CD8-positive, alpha-beta memory T cell (primary cell): ENCODE measurements at regions of chr7 and their contacts with region 1.

Region 1: GRCh38 chr7:44858161-44858560 is 10.3 kb upstream of the H2AZ2 start:
- DNase-seq: no peak
- H3K4me3 ChIP-seq: no peak overlapping the region
- H3K4me3 Mint-ChIP-seq: no peak overlapping the region
- H3K27ac ChIP-seq: no peak overlapping the region
- H3K27ac Mint-ChIP-seq: no peak overlapping the region
- H3K4me1 ChIP-seq: no peaks in the 10 kb centered on the region
- H3K4me1 Mint-ChIP-seq: peaks cover 3 to 6% (median 5%) of the 10 kb centered on the region in 3 donors
- H3K27me3 ChIP-seq: no peaks in the 10 kb centered on the region
- H3K27me3 Mint-ChIP-seq: peaks cover 0 to 12% of the 10 kb centered on the region in 2 donors

Region 2: DNA sequence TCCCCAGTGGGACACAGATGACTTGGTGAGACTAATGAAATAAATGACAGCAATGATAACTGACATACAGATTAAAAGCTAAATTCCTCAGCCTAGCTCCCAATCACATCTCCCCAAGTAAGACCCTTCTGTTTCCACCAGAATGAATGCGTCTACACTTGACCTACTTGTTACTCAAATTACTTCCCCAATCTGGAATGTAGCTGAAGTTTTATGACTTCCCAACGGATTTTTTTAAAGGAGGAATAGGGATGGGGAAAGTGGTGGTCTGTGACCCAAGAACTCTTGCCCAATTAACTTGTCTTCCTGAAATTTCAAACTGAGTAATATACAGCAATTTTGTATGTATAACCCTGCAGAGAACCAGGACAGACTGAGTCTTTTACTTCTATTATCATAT is 19.4 kb before region 1 on chr7:
- CTCF ChIA-PET with region 1: no interaction called
- POLR2A ChIA-PET with region 1: no interaction called
- DNase-seq: no peak
- H3K4me3 ChIP-seq: no peak overlapping the region
- H3K4me3 Mint-ChIP-seq: no peak overlapping the region
- H3K27ac ChIP-seq: no peak overlapping the region
- H3K27ac Mint-ChIP-seq: peak overlapping the region in 3 of 8 donors; percentile 32 to 54 (median 49)
- H3K4me1 ChIP-seq: no peaks in the 10 kb centered on the region
- H3K4me1 Mint-ChIP-seq: peaks cover 17 to 33% (median 31%) of the 10 kb centered on the region in 3 donors
- H3K27me3 ChIP-seq: no peaks in the 10 kb centered on the region
- H3K27me3 Mint-ChIP-seq: no peaks in the 10 kb centered on the region

Region 3: GRCh38 chr7:44921607-44922359 is 63.6 kb after region 1 on chr7:
- CTCF ChIA-PET with region 1: interaction called, 60 read pairs
- POLR2A ChIA-PET with region 1: interaction called, 3 read pairs
- DNase-seq: peak; percentile 82 to 95 (median 89)
- H3K4me3 ChIP-seq: no peak overlapping the region
- H3K4me3 Mint-ChIP-seq: peak overlapping the region in 1 of 7 donors; percentile 57
- H3K27ac ChIP-seq: no peak overlapping the region
- H3K27ac Mint-ChIP-seq: peak overlapping the region in 5 of 8 donors; percentile 37 to 90 (median 73)
- H3K4me1 ChIP-seq: peaks cover 4% of the 10 kb centered on the region
- H3K4me1 Mint-ChIP-seq: peaks cover 5 to 10% (median 8%) of the 10 kb centered on the region in 3 donors
- H3K27me3 ChIP-seq: no peaks in the 10 kb centered on the region
- H3K27me3 Mint-ChIP-seq: no peaks in the 10 kb centered on the region